Activated naive CD4-positive, alpha-beta T cell treated with anti-CD3 and anti-CD28 coated beads for 36 hours (primary cell): ENCODE measurements at regions of chr11 and their contacts with region 1.

Region 1: GRCh38 chr11:63567044-63567840 is 4.1 kb upstream of the PLAAT2 start:
- DNase-seq: peak; percentile 73
- H3K4me3 Mint-ChIP-seq: peak overlapping the region; percentile 64
- H3K27ac Mint-ChIP-seq: peak overlapping the region; percentile 79
- H3K4me1 Mint-ChIP-seq: peaks cover 41% of the 10 kb centered on the region
- H3K27me3 Mint-ChIP-seq: no peaks in the 10 kb centered on the region

Region 2: DNA sequence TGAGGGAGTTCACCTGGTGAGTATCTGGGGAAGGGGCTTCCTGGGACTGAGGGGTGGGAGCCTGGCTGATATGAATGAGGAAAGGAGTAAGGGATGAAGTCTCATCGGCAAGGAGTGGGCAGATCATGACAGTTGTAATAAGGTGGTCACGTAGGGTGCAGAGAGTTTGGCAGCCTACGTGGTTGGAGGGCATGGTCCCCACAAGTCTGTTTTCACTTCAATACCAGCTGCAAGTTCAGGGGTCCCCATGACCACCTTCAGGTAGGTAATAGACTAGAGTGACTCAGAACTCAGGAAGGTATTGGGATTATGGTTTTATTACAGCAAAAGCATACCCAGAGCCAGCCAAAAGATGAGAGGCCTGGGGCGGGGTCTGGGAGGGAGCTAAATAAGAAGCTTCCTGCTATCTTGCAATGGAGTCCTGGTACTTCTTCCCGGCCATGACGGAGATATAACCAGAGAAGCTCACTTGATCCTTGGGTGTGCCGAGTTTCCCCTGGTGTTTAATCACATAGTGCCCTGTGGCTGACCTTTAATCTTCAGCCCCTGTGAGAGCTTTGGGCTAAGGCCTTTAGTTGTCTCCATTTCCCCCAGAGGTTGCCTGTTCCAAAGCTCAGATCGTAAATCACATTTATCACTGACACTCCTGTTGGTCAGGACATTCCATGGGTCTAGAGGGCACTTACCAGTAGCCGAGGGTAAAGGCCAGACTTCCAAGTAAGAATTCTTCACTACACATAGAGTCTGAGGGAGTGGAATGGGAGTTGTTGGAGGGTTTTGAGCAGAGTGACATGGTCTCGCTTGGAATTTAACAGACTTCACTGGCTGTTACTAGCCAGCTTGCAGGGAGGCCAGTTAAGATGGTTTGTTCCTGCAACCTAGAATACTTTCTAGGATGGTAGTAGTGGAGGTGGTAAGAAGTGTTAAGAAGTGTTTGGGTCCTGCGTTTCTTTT is 677.5 kb before region 1 on chr11:
- CTCF ChIA-PET with region 1: no interaction called
- intact Hi-C with region 1: loop called (anchors 10 kb)
- DNase-seq: peak; percentile 23
- H3K4me3 Mint-ChIP-seq: no peak overlapping the region
- H3K27ac Mint-ChIP-seq: peak overlapping the region; percentile 78
- H3K4me1 Mint-ChIP-seq: peaks cover 22% of the 10 kb centered on the region
- H3K27me3 Mint-ChIP-seq: no peaks in the 10 kb centered on the region

Region 3: GRCh38 chr11:63536669-63537292 is 30.5 kb before region 1 on chr11 and contains the start of gene PLAAT4:
- CTCF ChIA-PET with region 1: interaction called, 6 read pairs
- intact Hi-C with region 1: loop called (anchors 1 kb)
- DNase-seq: peak; percentile 42
- H3K4me3 Mint-ChIP-seq: peak within 1 kb of the TSS; percentile 72
- H3K27ac Mint-ChIP-seq: peak within 1 kb of the TSS; percentile 69
- H3K4me1 Mint-ChIP-seq: peaks cover 76% of the 10 kb centered on the region
- H3K27me3 Mint-ChIP-seq: no peaks in the 10 kb centered on the region
- total RNA-seq, gene PLAAT4: 16.1 to 16.6 TPM

Region 4: DNA sequence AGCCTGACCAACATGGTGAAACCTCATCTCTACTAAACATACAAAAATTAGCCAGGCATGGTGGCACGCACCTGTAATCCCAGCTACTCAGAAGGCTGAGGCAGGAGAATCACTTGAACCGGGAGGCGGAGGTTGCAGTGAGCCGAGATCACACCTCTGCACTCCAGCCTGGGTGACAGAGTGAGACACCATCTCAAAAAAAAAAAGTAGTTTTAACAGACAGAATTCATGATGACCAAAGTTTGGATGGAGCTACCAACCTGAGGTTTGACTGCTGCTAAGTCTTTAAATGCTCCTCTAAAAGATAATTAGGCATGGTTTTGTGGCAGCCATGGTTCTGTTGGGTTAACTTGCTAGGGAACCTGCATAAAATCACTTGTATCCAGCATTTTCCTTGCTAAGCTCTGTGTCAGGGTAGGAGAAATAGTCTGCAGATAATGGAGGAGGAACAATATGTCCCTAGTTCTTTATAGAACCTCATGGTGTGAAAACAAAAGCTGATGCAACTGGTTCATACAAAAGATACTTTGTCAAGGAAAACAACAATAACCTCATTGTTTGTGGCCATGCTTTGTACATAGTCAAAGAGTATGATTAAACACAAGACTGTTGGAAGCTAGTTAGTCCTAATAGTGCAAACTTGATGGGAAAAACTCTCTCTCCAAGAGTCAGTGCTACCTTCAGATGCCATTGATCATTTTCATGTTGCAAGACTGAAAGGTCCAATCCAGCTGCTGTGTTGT is 15.9 kb after region 1 on chr11:
- CTCF ChIA-PET with region 1: no interaction called
- intact Hi-C with region 1: loop called (anchors 2 kb)
- DNase-seq: no peak
- H3K4me3 Mint-ChIP-seq: no peak overlapping the region
- H3K27ac Mint-ChIP-seq: no peak overlapping the region
- H3K4me1 Mint-ChIP-seq: peaks cover 12% of the 10 kb centered on the region
- H3K27me3 Mint-ChIP-seq: no peaks in the 10 kb centered on the region

Region 5: GRCh38 chr11:63671322-63672155 is 104.3 kb after region 1 on chr11 and contains the start of gene ATL3:
- CTCF ChIA-PET with region 1: no interaction called
- intact Hi-C with region 1: loop called (anchors 1 kb)
- DNase-seq: peak; percentile 93
- H3K4me3 Mint-ChIP-seq: peak within 1 kb of the TSS; percentile 84
- H3K27ac Mint-ChIP-seq: peak within 1 kb of the TSS; percentile 83
- H3K4me1 Mint-ChIP-seq: peaks cover 39% of the 10 kb centered on the region
- H3K27me3 Mint-ChIP-seq: no peaks in the 10 kb centered on the region
- total RNA-seq, gene ATL3: 19.5 to 21.0 TPM

Region 6: DNA sequence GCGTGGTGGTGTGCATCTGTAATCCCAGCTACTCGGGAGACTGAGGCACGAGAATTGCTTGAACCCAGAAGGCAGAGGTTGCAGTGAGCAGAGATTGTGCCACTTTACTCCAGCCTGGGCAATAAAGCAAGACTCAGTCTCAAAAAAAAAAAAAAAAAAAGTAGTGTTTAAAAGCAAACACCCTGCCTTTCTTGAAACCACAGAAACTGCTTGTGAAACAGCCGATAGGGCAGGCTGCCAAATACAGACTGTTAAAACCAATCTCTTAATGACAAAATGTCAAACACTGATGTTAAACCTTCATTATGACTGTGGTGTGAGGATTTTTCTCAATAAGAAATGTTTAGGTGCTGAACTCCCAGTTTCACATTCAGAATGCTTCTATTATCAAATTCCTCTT is 299.0 kb after region 1 on chr11:
- CTCF ChIA-PET with region 1: no interaction called
- intact Hi-C with region 1: loop called (anchors 1 kb)
- DNase-seq: peak; percentile 97
- H3K4me3 Mint-ChIP-seq: peak overlapping the region; percentile 11
- H3K27ac Mint-ChIP-seq: no peak overlapping the region
- H3K4me1 Mint-ChIP-seq: peaks cover 80% of the 10 kb centered on the region
- H3K27me3 Mint-ChIP-seq: no peaks in the 10 kb centered on the region